Caco-2 (cell line): ENCODE measurements at regions of chr3 and their contacts with region 1.

Region 1: DNA sequence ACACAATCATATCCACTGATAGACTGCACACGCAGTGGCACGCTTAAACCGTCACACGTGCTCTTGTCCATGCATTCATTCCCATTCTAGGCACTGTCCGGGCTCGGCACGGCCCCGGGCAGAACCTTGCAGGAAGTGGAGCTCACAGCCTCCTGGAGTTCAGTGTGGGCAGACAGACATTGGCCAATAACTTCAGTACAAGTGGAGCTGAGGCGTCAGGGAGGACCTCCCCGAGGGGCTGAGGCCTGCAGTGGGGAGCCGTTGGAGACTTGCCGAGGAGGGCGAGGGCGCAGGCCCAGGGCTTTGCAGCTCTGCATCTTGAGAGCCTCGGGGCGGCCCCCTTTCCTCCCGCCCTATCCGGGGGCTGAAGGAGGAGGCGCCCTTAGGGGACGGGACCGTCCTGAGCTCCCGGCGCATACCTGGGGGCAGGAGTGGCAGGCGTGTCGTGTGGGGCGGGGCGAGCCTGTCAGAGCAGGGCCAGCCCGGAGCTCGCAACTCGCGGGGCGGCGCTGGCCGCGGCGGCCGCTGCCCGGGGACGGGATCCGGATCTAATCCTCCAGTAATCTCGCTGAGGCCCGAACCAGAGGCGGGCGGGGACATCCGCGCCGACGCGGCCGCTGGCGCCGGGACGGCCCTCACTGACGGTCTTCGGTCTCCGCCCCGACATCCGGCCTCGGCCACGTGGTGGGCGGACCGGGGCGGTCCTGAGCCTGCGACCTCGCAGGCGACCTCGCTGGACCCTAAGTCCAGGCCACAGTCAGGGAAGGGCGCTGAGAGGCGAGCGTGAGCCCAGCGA is at the start of gene ACY1:
- DNase-seq: peak; percentile 95 to 96
- H3K4me3 ChIP-seq: peak within 1 kb of the TSS; percentile 46
- H3K4me3 Mint-ChIP-seq: peak within 1 kb of the TSS; percentile 99
- H3K27ac Mint-ChIP-seq: peak within 1 kb of the TSS; percentile 86
- H3K4me1 ChIP-seq: peaks cover 46% of the 10 kb centered on the region
- H3K4me1 Mint-ChIP-seq: peaks cover 15% of the 10 kb centered on the region
- H3K27me3 ChIP-seq: no peaks in the 10 kb centered on the region
- H3K27me3 Mint-ChIP-seq: no peaks in the 10 kb centered on the region
- CTCF ChIP-seq: peak in 1 of 2 experiments; percentile 0
- total RNA-seq, gene ACY1: 62.4 and 67.9 TPM in 2 replicates

Region 2: GRCh38 chr3:51967384-51968169 is 15.4 kb before region 1 on chr3 and contains the start of gene PCBP4:
- CTCF ChIA-PET with region 1: interaction called, 51 read pairs
- POLR2A ChIA-PET with region 1: interaction called, 13 read pairs
- intact Hi-C with region 1: loop called (anchors 2 kb)
- DNase-seq: peak; percentile 79 to 80
- H3K4me3 ChIP-seq: peak within 1 kb of the TSS; percentile 53
- H3K4me3 Mint-ChIP-seq: peak within 1 kb of the TSS; percentile 86
- H3K27ac Mint-ChIP-seq: peak within 1 kb of the TSS; percentile 79
- H3K4me1 ChIP-seq: peaks cover 13% of the 10 kb centered on the region
- H3K4me1 Mint-ChIP-seq: peaks cover 20% of the 10 kb centered on the region
- H3K27me3 ChIP-seq: no peaks in the 10 kb centered on the region
- H3K27me3 Mint-ChIP-seq: no peaks in the 10 kb centered on the region
- CTCF ChIP-seq: no peak
- total RNA-seq, gene PCBP4: 42.3 and 46.5 TPM in 2 replicates

Region 3: GRCh38 chr3:51995346-51996163 is 12.6 kb after region 1 on chr3 and contains the start of gene RPL29:
- CTCF ChIA-PET with region 1: interaction called, 14 read pairs
- POLR2A ChIA-PET with region 1: interaction called, 30 read pairs
- intact Hi-C with region 1: loop called (anchors 1 kb)
- DNase-seq: peak; percentile 93
- H3K4me3 ChIP-seq: peak within 1 kb of the TSS; percentile 60
- H3K4me3 Mint-ChIP-seq: peak within 1 kb of the TSS; percentile 93
- H3K27ac Mint-ChIP-seq: peak within 1 kb of the TSS; percentile 99
- H3K4me1 ChIP-seq: peaks cover 18% of the 10 kb centered on the region
- H3K4me1 Mint-ChIP-seq: peaks cover 9% of the 10 kb centered on the region
- H3K27me3 ChIP-seq: no peaks in the 10 kb centered on the region
- H3K27me3 Mint-ChIP-seq: no peaks in the 10 kb centered on the region
- CTCF ChIP-seq: no peak
- total RNA-seq, gene RPL29: 976 and 995 TPM in 2 replicates

Region 4: GRCh38 chr3:52001443-52001974 is 18.5 kb after region 1 on chr3:
- CTCF ChIA-PET with region 1: interaction called, 5 read pairs
- POLR2A ChIA-PET with region 1: interaction called, 10 read pairs
- intact Hi-C with region 1: no loop called
- DNase-seq: peak; percentile 87 to 91
- H3K4me3 ChIP-seq: no peak overlapping the region
- H3K4me3 Mint-ChIP-seq: peak overlapping the region; percentile 37
- H3K27ac Mint-ChIP-seq: no peak overlapping the region
- H3K4me1 ChIP-seq: peaks cover 8% of the 10 kb centered on the region
- H3K4me1 Mint-ChIP-seq: peaks cover 9% of the 10 kb centered on the region
- H3K27me3 ChIP-seq: no peaks in the 10 kb centered on the region
- H3K27me3 Mint-ChIP-seq: no peaks in the 10 kb centered on the region
- CTCF ChIP-seq: peak; percentile 95 to 98